ENCODE measurements at regions of chr5 and their contacts with region 1.

Region 1: DNA sequence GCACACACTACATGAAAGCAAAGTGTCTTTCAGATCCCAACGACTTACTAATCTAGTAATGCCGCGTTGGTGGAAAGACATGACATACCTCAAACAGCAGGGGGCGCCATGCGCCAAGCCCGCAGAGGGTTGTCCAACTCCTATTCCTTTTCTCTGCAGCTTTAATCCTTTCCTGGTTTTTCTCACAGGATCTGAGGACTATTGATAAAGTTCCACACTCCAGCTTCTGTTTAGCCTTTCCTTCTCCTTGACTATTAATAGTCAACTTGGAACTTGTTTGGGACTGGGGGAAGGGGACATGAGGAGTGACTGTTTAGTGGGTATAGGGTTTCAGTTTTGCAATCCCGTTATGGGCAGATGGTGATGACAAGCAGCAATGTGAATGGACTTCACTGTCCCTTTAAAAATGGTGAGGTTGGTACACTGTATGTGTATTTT is 62.9 kb downstream of the OTULIN start:
- DNase-seq: peak; percentile 60 to 76
- ATAC-seq: peak; percentile 82 to 91
- H3K4me3 ChIP-seq: no peak overlapping the region
- H3K27ac ChIP-seq: no peak overlapping the region
- H3K4me1 ChIP-seq: no peaks in the 10 kb centered on the region
- CTCF ChIP-seq: peak; percentile 95
- EP300 ChIP-seq: no peak
- POLR2A ChIP-seq: no peak
- RAD21 ChIP-seq: peak; percentile 97 to 98

Region 2: DNA sequence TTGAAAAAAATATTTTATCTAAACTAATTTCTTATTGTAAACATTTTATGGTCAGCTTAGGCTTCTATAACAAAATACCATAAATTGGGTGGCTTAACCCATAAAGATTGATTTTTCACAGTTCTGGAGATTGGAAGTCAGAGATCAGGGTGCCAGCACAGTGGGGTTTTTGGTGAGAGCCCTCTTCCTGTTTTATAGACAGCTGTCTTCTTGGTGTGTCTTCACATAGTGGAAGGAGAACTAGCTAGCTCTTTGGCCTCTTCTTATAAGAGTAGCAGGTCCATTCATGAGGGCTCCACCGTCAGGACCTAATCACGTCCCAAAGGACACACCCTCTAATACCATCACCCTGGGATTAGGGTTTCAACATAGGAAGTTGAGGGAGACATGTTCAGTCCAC is 119.3 kb before region 1 on chr5:
- CTCF ChIA-PET with region 1: no interaction called
- POLR2A ChIA-PET with region 1: no interaction called
- DNase-seq: no peak
- ATAC-seq: no peak
- H3K4me3 ChIP-seq: no peak overlapping the region
- H3K27ac ChIP-seq: no peak overlapping the region
- H3K4me1 ChIP-seq: no peaks in the 10 kb centered on the region
- CTCF ChIP-seq: no peak
- EP300 ChIP-seq: no peak
- POLR2A ChIP-seq: no peak
- RAD21 ChIP-seq: no peak

Region 3: DNA sequence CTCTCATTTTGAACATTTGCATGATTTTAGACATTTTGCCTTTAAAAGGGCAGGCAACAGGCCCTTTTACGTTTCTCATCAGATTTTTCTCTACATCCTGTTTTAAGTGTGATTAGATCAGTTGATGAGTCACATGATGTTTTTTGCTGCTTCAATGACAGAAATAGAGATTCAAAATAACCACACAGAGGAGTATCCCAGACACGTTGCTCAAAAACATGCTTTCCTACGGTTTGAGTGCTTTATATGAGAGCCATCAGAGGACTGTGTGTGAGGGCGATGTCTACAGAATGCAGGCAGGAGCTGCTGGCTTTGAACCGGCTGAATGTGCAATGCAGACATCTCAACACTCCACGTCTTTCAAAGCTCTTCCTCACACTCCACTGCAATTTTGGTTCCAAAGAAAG is 20.8 kb before region 1 on chr5:
- CTCF ChIA-PET with region 1: interaction called, 56 read pairs
- POLR2A ChIA-PET with region 1: no interaction called
- DNase-seq: no peak
- ATAC-seq: no peak
- H3K4me3 ChIP-seq: no peak overlapping the region
- H3K27ac ChIP-seq: no peak overlapping the region
- H3K4me1 ChIP-seq: no peaks in the 10 kb centered on the region
- CTCF ChIP-seq: no peak
- EP300 ChIP-seq: no peak
- POLR2A ChIP-seq: no peak
- RAD21 ChIP-seq: no peak

Region 4: DNA sequence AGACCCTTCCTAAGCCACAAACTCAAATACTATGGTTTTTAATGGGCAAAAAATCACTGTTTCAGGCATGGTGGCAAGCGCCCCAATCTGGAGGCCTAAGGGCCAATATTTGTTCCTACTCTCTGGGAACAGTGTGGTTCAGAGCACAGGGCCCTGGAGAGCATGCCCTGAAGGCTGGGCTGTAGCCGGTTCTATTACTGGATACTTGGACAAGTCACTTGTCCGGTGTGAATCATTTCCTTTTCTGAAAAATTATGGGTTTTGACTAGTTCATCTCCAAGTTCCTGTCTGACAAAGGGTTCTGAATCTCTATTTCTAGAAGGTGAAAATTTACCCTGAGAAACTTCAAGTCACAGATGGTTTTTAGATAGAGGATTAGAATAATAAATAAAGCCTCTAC is 12.1 kb after region 1 on chr5:
- CTCF ChIA-PET with region 1: interaction called, 21 read pairs
- POLR2A ChIA-PET with region 1: no interaction called
- DNase-seq: no peak
- ATAC-seq: no peak
- H3K4me3 ChIP-seq: no peak overlapping the region
- H3K27ac ChIP-seq: no peak overlapping the region
- H3K4me1 ChIP-seq: no peaks in the 10 kb centered on the region
- CTCF ChIP-seq: no peak
- EP300 ChIP-seq: no peak
- POLR2A ChIP-seq: no peak
- RAD21 ChIP-seq: no peak

Region 5: GRCh38 chr5:14871210-14872069 is 144.0 kb after region 1 on chr5 and contains the start of gene ANKH:
- CTCF ChIA-PET with region 1: interaction called, 25 read pairs
- POLR2A ChIA-PET with region 1: no interaction called
- DNase-seq: peak; percentile 45 to 69
- ATAC-seq: peak; percentile 90 to 92
- H3K4me3 ChIP-seq: peak within 1 kb of the TSS; percentile 76
- H3K27ac ChIP-seq: peak within 1 kb of the TSS; percentile 92 to 98
- H3K4me1 ChIP-seq: peaks cover 16% of the 10 kb centered on the region; the same call in 2 of the 3 replicates
- CTCF ChIP-seq: peak; percentile 81
- EP300 ChIP-seq: no peak
- POLR2A ChIP-seq: peak; percentile 50; the same call in 1 of the 2 replicates
- RAD21 ChIP-seq: no peak
- polyA plus RNA-seq, gene ANKH: 17.3 and 18.7 TPM in 2 replicates

Region 6: DNA sequence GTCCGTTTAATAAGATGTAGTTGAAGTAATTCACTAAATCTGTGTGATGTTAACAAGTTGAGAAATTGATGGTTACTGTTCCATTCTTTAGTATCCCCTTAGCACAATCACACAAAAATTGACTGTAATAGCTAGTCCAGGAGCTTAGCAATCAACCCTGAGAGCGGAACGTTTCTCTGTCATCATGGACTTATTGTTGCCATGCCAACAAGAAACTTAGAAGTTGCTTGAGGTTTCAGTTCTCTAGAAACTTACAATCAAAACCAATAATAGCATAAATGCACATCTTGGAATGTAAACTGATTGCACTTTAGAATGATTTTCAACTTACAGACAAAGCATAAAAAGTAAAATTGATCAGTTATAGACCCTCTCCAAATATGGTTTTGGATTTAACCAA is 269.6 kb after region 1 on chr5:
- CTCF ChIA-PET with region 1: interaction called, 144 read pairs
- POLR2A ChIA-PET with region 1: no interaction called
- DNase-seq: no peak
- ATAC-seq: no peak
- H3K4me3 ChIP-seq: no peak overlapping the region
- H3K27ac ChIP-seq: no peak overlapping the region
- H3K4me1 ChIP-seq: no peaks in the 10 kb centered on the region
- CTCF ChIP-seq: no peak
- EP300 ChIP-seq: no peak
- POLR2A ChIP-seq: no peak
- RAD21 ChIP-seq: no peak

Region 7: DNA sequence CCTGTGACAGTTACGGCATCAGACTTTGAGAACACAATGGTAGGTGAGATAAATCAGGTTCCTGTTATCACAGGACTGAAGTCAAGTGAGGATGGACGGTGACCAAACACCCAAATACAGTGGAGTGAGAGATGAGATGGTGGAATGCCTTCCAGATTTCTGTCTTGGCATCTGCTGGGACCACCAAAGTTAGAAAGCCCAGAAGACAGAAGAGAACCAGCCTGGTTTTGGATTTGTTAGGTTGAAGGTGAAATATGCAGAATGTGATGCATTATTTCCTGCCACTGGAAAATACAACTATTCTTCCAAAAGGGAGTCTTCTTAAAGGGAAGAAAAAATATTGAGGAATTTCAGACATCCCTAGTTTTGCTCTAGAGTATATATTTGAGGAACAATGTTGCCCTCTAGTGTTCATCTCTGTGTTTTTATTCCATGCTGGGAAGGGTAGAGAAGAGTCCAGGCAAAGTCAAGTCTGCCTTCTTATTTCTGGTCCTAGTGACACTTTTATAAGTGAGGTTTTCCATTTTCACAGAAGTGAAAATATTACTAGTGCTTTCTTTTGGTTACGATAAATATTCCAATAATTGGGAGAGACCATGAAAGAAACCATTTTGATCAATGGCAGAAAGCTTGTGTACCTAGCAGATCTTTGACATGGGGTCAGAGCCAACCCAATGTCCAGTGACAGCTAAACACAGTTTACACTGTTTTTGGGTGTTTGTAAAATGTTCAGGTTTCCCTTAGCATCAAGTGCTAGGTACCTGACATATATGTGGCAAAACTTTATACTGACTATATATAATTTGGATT is 286.4 kb after region 1 on chr5:
- CTCF ChIA-PET with region 1: interaction called, 103 read pairs
- POLR2A ChIA-PET with region 1: no interaction called
- DNase-seq: peak; percentile 42 to 76
- ATAC-seq: peak; percentile 85 to 89
- H3K4me3 ChIP-seq: no peak overlapping the region
- H3K27ac ChIP-seq: peak overlapping the region; percentile 39 to 73; a peak in 5 of 6 replicates
- H3K4me1 ChIP-seq: peaks cover 46% of the 10 kb centered on the region
- CTCF ChIP-seq: peak; percentile 82
- EP300 ChIP-seq: no peak
- POLR2A ChIP-seq: no peak
- RAD21 ChIP-seq: peak; percentile 89

Region 8: DNA sequence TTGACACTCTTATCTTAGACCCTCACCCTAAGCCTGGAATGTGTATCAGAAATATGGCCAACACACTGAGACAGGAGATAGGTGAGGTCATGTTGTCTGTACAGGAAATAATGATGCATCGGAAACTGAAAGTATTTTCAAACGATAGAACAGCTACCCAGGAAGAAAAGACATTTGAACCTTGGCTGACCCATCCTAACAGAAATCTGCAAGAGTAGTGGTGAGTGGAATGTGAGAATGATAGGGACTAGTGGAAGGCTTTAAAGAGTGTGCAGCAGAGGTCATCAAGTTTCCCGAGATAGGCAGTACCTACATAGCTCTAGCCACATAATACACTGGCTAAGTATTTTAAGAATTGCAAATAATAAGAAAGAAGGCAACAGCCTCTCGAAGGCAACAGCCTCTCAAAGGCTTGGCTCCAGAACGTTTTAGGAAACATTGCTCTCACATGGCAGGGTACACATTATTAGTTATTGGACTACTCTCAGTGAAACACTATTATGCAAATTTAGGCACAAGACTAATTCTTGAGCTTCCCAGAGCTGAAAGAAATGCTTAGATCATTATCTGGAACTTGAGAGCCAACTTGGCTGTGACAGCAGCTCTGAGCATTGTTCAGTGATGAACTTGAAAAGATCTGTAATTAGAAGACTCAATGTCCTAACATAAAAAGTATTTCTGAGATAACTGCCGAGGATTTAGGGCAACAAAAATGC is 639.4 kb after region 1 on chr5:
- CTCF ChIA-PET with region 1: no interaction called
- POLR2A ChIA-PET with region 1: no interaction called
- DNase-seq: no peak
- ATAC-seq: no peak
- H3K4me3 ChIP-seq: no peak overlapping the region
- H3K27ac ChIP-seq: no peak overlapping the region
- H3K4me1 ChIP-seq: no peaks in the 10 kb centered on the region
- CTCF ChIP-seq: no peak
- EP300 ChIP-seq: no peak
- POLR2A ChIP-seq: no peak
- RAD21 ChIP-seq: no peak

Measured in A549 (cell line).